ENCODE measurements at regions of chr17 and their contacts with region 1.

Region 1: DNA sequence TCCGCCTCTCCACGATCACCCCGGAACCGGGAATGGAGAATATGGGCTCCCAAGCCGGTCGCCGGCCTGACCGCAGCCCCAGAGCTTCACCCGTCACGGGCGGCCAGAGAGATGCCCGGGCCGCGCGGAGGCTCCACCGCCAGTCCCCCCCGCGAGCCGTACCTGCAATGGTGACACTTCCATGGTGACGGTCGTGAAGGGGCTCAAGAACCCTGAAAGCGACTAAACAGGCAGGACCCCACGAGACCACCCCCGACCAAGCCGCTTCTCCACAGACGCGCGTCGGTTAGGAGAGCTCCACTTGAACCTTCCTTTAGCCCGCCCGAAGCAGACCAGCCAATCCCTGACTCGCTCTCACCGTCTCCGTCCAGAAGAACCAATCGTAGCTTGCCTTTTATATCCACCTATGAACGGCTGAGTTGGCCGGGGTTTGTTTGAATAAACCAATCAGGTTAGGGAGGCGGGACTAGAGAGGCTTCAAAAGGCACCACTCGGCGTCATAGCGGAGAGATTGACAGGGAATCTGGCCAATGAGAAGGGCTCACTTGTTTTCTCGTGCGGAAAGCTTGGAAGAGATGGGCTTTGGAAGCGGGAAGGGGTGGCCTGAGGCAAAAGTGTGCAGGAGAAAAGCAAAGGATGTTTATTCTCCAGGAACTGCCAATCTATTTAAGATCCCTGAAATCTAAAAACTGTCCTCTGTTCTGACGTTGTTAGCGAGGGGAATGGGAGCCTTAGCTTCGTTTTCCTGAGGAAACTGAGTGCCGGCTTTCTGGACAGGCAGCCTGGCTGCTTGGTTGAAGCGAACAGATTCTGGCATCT is at the start of gene TOP2A:
- DNase-seq: peak; percentile 98
- ATAC-seq: peak; percentile 98
- H3K4me3 Mint-ChIP-seq: peak within 1 kb of the TSS; percentile 89
- H3K27ac Mint-ChIP-seq: peak within 1 kb of the TSS; percentile 95
- H3K4me1 Mint-ChIP-seq: peaks cover 28% of the 10 kb centered on the region
- H3K27me3 Mint-ChIP-seq: peaks cover 6% of the 10 kb centered on the region
- total RNA-seq, gene TOP2A: 310 to 347 TPM

Region 2: GRCh38 chr17:40264458-40265185 is 153.2 kb before region 1 on chr17:
- CTCF ChIA-PET with region 1: no interaction called
- DNase-seq: no peak
- ATAC-seq: no peak
- H3K4me3 Mint-ChIP-seq: no peak overlapping the region
- H3K27ac Mint-ChIP-seq: no peak overlapping the region
- H3K4me1 Mint-ChIP-seq: no peaks in the 10 kb centered on the region
- H3K27me3 Mint-ChIP-seq: no peaks in the 10 kb centered on the region

Region 3: GRCh38 chr17:40399185-40399584 is 18.6 kb before region 1 on chr17:
- CTCF ChIA-PET with region 1: interaction called, 78 read pairs
- DNase-seq: no peak
- ATAC-seq: no peak
- H3K4me3 Mint-ChIP-seq: no peak overlapping the region
- H3K27ac Mint-ChIP-seq: no peak overlapping the region
- H3K4me1 Mint-ChIP-seq: peaks cover 6% of the 10 kb centered on the region
- H3K27me3 Mint-ChIP-seq: no peaks in the 10 kb centered on the region

Region 4: GRCh38 chr17:40443583-40444327 is 25.9 kb after region 1 on chr17:
- CTCF ChIA-PET with region 1: interaction called, 62 read pairs
- DNase-seq: peak; percentile 77
- ATAC-seq: peak; percentile 87
- H3K4me3 Mint-ChIP-seq: peak overlapping the region; percentile 66
- H3K27ac Mint-ChIP-seq: peak overlapping the region; percentile 87
- H3K4me1 Mint-ChIP-seq: peaks cover 44% of the 10 kb centered on the region
- H3K27me3 Mint-ChIP-seq: peaks cover 22% of the 10 kb centered on the region

Region 5: DNA sequence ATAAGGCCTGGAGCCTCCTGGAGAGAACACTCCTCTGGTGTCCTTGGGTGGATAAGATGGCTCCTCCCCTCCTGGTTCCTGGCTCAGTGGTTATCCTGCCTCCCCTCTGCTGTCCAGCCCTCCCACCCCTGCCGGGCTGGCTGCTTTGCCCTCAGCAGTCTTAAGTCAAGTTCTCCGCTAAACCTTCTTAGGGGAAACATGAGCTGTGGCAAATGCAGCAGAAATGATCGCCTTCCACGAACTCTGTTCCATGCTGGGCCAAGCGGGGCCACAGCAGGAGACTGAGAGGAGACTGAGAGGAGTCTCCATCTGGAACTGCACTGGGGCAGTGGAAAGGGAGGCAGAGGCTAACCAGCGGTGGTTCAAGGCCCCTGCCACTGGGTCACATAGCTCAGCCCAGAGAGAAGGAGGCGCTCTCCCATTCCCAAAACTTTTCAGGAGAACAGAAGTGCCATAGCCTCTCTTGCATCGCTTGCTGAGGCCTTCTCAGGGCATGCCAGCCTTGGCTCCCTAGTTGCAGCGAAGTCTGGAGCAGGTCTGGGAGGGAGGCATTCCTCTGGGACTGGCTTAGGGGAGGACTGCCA is 56.7 kb after region 1 on chr17:
- CTCF ChIA-PET with region 1: interaction called, 10 read pairs
- DNase-seq: no peak
- ATAC-seq: no peak
- H3K4me3 Mint-ChIP-seq: no peak overlapping the region
- H3K27ac Mint-ChIP-seq: no peak overlapping the region
- H3K4me1 Mint-ChIP-seq: peaks cover 13% of the 10 kb centered on the region
- H3K27me3 Mint-ChIP-seq: peaks cover 9% of the 10 kb centered on the region

Region 6: GRCh38 chr17:40548982-40549685 is 131.3 kb after region 1 on chr17:
- CTCF ChIA-PET with region 1: interaction called, 18 read pairs
- DNase-seq: no peak
- ATAC-seq: no peak
- H3K4me3 Mint-ChIP-seq: no peak overlapping the region
- H3K27ac Mint-ChIP-seq: peak overlapping the region; percentile 20
- H3K4me1 Mint-ChIP-seq: peaks cover 73% of the 10 kb centered on the region
- H3K27me3 Mint-ChIP-seq: no peaks in the 10 kb centered on the region